ENCODE measurements at regions of chr17 and their contacts with region 1.

Region 1: DNA sequence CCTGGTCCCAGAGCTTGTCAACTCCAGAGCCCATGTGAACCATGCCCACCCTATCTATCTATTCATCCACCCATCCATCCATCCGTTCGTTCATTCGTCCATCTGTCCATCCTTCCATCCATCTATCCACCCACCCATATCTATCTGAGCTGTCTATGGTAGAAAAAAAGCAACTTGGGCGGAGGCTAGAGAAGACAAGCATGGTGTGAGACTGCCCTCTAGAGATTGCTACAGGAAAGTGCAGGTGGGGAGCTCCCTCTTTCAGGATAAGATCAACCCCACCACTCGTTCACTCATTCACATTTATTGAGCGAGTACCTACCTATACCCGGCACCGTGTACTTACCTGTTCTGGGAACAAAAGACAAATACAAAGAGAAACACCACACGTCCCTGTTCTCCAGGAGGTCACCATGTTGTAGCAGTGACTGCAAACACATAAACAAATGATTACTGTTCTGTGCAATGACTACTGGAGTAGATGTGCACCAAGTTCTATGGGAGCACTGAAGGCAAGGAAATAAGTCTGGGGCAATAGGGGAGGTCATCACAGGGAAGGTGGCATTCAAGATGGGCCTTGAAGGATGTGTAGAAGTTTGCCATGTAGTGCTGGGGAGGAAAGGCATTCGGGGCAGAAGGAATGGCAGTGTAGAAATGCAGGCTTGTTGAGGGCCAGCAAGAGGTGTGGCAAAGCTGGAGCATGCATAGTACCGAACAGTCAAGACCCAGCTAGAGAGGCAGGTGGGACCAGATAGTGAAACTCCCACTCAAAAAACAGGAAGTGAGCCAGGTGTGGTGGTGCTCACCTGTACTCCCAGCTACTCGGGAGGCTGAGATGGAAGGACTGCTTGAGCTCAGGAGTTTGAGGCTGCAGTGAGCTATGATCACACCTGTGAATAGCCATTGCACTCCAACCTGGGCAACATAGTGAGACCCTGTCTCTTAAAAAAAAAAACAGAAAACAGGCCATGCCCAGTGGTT is 13.4 kb upstream of the ATP5MC1 start:
- DNase-seq: peak; percentile 85 to 94
- ATAC-seq: peak; percentile 86 to 88
- H3K4me3 ChIP-seq: no peak overlapping the region
- H3K27ac ChIP-seq: no peak overlapping the region
- H3K4me1 ChIP-seq: peaks cover 15% of the 10 kb centered on the region
- CTCF ChIP-seq: peak; percentile 99
- EP300 ChIP-seq: no peak
- POLR2A ChIP-seq: no peak
- RAD21 ChIP-seq: peak; percentile 99 to 100

Region 2: DNA sequence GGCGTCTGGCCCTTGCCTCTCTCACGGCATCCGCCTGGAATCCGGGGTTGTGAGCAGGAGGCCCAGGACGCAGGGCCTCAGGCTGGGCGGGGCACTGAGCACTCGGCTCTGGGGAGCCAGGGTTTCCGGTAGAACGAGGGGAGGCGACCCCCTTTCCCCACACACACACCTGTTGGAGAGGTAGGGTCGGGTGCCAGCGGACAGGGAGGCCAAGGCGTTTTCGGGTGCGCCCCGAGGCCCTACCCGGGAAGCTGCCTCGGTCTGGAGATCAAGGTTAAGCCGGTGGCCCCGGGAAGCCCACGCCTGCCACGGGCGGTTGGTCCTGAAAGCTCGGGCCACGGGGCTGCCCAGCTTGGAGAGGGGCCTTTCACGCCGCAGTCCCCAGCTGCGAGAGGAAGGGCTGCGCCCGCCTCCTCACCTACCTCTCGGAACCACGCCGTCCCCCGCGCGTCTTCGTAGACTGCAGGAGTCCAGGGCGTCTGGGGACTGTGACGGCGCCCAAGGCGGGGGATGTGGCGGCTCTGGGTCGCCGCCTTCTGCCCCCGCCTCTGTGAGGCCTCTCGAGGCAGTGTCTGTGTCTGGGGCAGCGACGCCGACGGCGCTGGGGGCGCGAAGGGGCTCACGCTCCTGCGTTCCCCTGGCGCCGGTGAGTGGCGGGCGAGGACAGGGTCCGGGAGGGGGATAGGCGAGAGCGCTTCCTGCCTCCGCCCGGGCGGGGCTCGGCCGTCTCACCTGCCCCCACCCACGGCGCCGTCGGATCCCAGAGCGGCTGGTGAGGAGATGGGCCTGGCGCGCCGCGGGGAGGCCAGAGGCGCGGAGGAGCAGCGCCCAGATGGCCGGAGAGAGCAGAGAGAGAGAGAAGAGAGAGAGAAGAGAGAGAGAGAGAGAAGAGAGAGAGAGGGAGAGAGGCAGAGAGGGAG is 232.8 kb before region 1 on chr17:
- CTCF ChIA-PET with region 1: interaction called, 13 read pairs
- POLR2A ChIA-PET with region 1: no interaction called
- DNase-seq: peak; percentile 64 to 80
- ATAC-seq: peak; percentile 76 to 79
- H3K4me3 ChIP-seq: peak overlapping the region; percentile 74
- H3K27ac ChIP-seq: peak overlapping the region; percentile 92 to 95
- H3K4me1 ChIP-seq: peaks cover 34% of the 10 kb centered on the region
- CTCF ChIP-seq: no peak
- EP300 ChIP-seq: no peak
- POLR2A ChIP-seq: peak; percentile 35
- RAD21 ChIP-seq: no peak

Region 3: DNA sequence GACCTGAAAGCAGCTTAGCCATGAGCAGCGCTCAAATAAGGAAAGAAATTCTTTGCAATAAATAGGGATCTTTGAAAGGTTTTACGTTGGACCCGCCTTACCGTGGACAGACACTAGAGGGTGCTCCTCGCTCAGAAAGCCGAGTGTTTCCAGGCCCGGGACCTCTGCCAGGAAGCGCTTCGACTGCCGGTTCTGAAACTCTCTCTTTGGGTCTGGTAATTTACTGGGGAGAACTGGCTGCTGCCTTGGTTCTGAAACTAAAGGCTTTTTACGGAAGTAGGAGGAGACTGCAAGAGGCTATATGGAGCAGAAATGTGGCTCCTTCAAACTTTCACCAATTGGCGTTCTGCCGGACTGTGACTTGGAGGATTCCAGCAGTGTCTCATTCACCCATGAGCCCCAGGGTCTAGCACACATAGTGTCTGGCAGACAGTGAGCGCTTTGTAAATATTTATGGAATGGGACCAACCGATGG is 207.5 kb before region 1 on chr17:
- CTCF ChIA-PET with region 1: interaction called, 368 read pairs
- POLR2A ChIA-PET with region 1: interaction called, 4 read pairs
- DNase-seq: peak; percentile 72 to 79
- ATAC-seq: peak; percentile 81 to 86
- H3K4me3 ChIP-seq: peak overlapping the region; percentile 10; the same call in 2 of the 3 replicates
- H3K27ac ChIP-seq: peak overlapping the region; percentile 29 to 69
- H3K4me1 ChIP-seq: peaks cover 3% of the 10 kb centered on the region; the same call in 1 of the 3 replicates
- CTCF ChIP-seq: peak; percentile 91
- EP300 ChIP-seq: no peak
- POLR2A ChIP-seq: no peak
- RAD21 ChIP-seq: peak; percentile 90 to 93

Region 4: GRCh38 chr17:48756830-48757251 is 122.4 kb before region 1 on chr17:
- CTCF ChIA-PET with region 1: interaction called, 24 read pairs
- POLR2A ChIA-PET with region 1: no interaction called
- DNase-seq: no peak
- ATAC-seq: no peak
- H3K4me3 ChIP-seq: no peak overlapping the region
- H3K27ac ChIP-seq: no peak overlapping the region
- H3K4me1 ChIP-seq: peaks cover 40% of the 10 kb centered on the region
- CTCF ChIP-seq: no peak
- EP300 ChIP-seq: no peak
- POLR2A ChIP-seq: no peak
- RAD21 ChIP-seq: no peak

Region 5: GRCh38 chr17:48892940-48893645 is 13.9 kb after region 1 on chr17:
- CTCF ChIA-PET with region 1: interaction called, 86 read pairs
- POLR2A ChIA-PET with region 1: interaction called, 8 read pairs
- DNase-seq: no peak
- ATAC-seq: no peak
- H3K4me3 ChIP-seq: peak overlapping the region; percentile 86
- H3K27ac ChIP-seq: peak overlapping the region; percentile 89 to 92
- H3K4me1 ChIP-seq: peaks cover 26% of the 10 kb centered on the region
- CTCF ChIP-seq: no peak
- EP300 ChIP-seq: no peak
- POLR2A ChIP-seq: no peak
- RAD21 ChIP-seq: no peak